ENCODE measurements at regions of chr2 and their contacts with region 1.

Region 1: DNA sequence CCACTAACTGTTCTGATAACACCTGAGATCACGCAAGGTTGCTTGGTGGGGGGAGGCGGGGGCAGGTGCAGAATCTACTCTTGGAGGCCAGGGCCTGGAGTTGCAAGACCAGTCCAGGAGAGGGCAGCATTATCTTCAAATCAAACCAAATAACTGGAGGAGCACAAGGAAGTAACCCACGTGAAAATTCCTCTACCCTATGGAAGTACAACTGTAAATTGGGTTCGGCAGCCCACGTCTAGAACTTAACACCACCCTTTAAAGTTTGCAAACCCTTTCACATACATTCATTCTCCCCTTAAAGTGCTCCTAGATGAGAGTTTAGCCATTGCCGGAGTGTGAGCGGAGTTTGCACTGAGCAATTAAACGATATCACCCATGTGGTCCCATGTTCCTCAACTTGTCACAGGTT is 19.6 kb upstream of the CXCR1 start:
- DNase-seq: peak; percentile 63 to 81
- ATAC-seq: peak; percentile 96

Region 2: GRCh38 chr2:217934321-217935131 is 251.8 kb before region 1 on chr2:
- intact Hi-C with region 1: no loop called
- DNase-seq: peak in 1 of 2 donors; percentile 72
- ATAC-seq: peak; percentile 36

Region 3: GRCh38 chr2:218269899-218270720 is 83.7 kb after region 1 on chr2 and contains the starts of genes AAMP and PNKD:
- intact Hi-C with region 1: loop called in 1 of 2 experiments (anchors 5 kb)
- DNase-seq: peak; percentile 100
- ATAC-seq: peak; percentile 73
- total RNA-seq, gene AAMP: 96.2 to 97.2 TPM
- total RNA-seq, gene PNKD: 103 to 119 TPM